ENCODE measurements at regions of chrX and their contacts with region 1.

Region 1: DNA sequence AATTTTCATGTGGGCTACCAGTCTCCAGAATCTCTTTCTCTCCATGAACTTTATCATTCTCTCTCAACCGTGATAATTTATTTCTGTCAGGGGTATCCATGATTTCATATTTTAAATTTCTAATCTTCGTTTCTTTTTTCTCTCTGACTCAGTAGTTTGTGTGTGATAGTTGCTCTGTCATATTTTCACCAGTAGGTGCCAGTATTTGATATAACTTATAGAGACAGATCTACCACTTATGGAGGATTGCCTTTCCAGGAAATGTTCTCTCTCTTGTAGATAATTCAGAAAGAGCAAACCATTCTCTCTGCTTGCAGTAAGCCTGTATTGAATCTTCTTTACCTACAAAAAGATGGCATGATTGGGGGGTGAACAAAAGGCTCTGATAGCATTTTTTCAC is 79.3 kb upstream of the DYNLT3 start:
- DNase-seq: no peak
- ATAC-seq: peak in 2 of 4 donors; percentile 46 to 59
- H3K4me3 ChIP-seq: no peak overlapping the region
- H3K27ac ChIP-seq: no peak overlapping the region
- H3K4me1 ChIP-seq: no peaks in the 10 kb centered on the region
- H3K27me3 ChIP-seq: peaks cover 0 to 26% (median 0%) of the 10 kb centered on the region in 9 donors
- CTCF ChIP-seq: peak; percentile 35 to 63 (median 45)
- POLR2A ChIP-seq: no peak

Region 2: GRCh38 chrX:37846934-37847732 is 79.6 kb before region 1 on chrX and contains the start of gene DYNLT3:
- intact Hi-C with region 1: no loop called
- DNase-seq: peak; percentile 82 to 89 (median 85)
- ATAC-seq: peak; percentile 98 to 100 (median 99)
- H3K4me3 ChIP-seq: peak within 1 kb of the TSS; percentile 15 to 82 (median 76)
- H3K27ac ChIP-seq: peak within 1 kb of the TSS; percentile 52 to 90 (median 80)
- H3K4me1 ChIP-seq: peaks cover 0 to 10% (median 0%) of the 10 kb centered on the region in 12 donors
- H3K27me3 ChIP-seq: no peaks in the 10 kb centered on the region
- CTCF ChIP-seq: peak in 1 of 12 donors; percentile 3
- POLR2A ChIP-seq: peak; percentile 46 to 90
- total RNA-seq, gene DYNLT3: 15.0 to 31.8 (median 21.0) TPM

Region 3: DNA sequence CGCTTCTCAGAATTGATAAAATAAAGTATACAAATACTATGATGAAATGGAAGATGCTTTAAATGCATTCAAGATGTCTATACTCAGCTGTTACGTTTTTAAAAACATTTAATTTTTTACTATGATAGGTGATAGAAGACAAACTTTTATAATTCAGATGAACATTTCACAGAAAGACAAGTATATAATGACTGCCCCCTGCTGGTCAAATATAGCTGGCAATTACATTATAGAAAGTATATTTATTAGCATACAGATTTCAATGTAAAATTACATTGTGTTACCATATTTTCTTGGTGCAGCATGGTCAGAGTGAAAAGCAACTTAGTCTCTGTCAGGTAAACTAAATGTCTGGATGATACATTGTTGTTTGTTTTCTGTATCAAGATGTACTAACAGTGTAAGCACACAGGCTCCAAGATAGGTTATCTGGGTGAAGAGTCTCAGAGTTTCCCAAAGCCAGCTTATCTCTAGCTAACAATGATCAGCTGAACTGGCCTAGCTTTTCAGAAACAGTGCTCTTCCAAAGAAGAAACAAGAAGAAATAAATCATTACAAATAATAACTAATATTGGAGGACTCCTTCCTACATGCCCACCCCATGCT is 239.9 kb after region 1 on chrX:
- intact Hi-C with region 1: loop called in 9 of 10 experiments (anchors 2 to 10 kb)
- DNase-seq: no peak
- ATAC-seq: no peak
- H3K4me3 ChIP-seq: no peak overlapping the region
- H3K27ac ChIP-seq: no peak overlapping the region
- H3K4me1 ChIP-seq: no peaks in the 10 kb centered on the region
- H3K27me3 ChIP-seq: peaks cover 0 to 23% (median 0%) of the 10 kb centered on the region in 9 donors
- CTCF ChIP-seq: peak; percentile 35 to 72 (median 48)
- POLR2A ChIP-seq: no peak

Region 4: GRCh38 chrX:38175140-38175539 is 248.4 kb after region 1 on chrX:
- intact Hi-C with region 1: loop called in 1 of 10 experiments (anchors 10 kb)
- DNase-seq: peak in 1 of 5 donors; percentile 15
- ATAC-seq: peak in 1 of 4 donors; percentile 54
- H3K4me3 ChIP-seq: no peak overlapping the region
- H3K27ac ChIP-seq: no peak overlapping the region
- H3K4me1 ChIP-seq: no peaks in the 10 kb centered on the region
- H3K27me3 ChIP-seq: peaks cover 0 to 13% (median 0%) of the 10 kb centered on the region in 9 donors
- CTCF ChIP-seq: peak in 7 of 12 donors; percentile 12 to 46 (median 25)
- POLR2A ChIP-seq: no peak

Region 5: DNA sequence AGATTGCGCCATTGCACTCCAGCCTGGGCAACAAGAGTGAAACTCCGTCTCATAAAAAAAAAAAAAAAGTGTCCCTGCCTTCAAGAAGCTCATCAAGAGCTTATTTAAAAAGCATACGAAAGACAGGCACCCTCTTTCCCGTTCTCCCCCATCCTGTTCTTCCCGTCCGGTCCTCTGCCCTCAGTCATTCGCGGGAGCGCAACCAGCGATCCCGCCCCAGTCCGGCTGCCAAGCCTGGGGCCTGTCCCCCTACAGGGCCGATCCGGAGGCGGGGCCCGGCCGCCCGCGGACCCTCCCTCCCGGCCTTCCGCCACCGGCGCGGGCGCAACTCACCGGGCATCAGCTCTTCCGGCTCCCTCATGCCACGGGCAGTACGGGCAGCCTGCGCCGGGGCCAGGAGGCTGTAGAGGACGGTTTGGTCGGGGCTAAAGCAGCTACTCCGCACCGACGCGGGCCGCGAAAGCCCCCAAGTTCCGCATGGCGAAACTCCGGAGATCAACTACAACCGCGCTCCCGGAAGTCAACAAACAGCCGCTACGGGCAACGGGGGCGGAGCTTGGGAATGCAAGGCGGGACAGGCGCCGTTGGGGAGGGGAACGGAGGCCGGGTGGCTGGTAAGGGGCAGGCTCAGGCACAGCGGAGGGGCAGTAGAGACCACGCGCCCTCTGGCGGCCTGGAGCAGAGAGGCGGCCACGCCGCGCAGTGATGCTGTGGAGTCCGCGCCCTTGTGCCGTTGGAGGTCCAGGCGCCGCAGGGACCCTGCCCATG is 400.5 kb after region 1 on chrX and contains the start of gene RPGR:
- intact Hi-C with region 1: loop called in 4 of 10 experiments (anchors 5 to 10 kb)
- DNase-seq: peak; percentile 92 to 95 (median 95)
- ATAC-seq: peak; percentile 96 to 99 (median 98)
- H3K4me3 ChIP-seq: peak within 1 kb of the TSS; percentile 36 to 88 (median 68)
- H3K27ac ChIP-seq: peak within 1 kb of the TSS; percentile 58 to 90 (median 80)
- H3K4me1 ChIP-seq: peaks cover 0 to 13% (median 0%) of the 10 kb centered on the region in 12 donors
- H3K27me3 ChIP-seq: peaks cover 0 to 3% (median 0%) of the 10 kb centered on the region in 9 donors
- CTCF ChIP-seq: peak; percentile 64 to 83 (median 75)
- POLR2A ChIP-seq: peak in 1 of 2 donors; percentile 58
- total RNA-seq, gene RPGR: 4.1 to 10.5 (median 6.8) TPM